Endothelial cell of umbilical vein (primary cell): ENCODE measurements at regions of chr1 and their contacts with region 1.

Region 1: DNA sequence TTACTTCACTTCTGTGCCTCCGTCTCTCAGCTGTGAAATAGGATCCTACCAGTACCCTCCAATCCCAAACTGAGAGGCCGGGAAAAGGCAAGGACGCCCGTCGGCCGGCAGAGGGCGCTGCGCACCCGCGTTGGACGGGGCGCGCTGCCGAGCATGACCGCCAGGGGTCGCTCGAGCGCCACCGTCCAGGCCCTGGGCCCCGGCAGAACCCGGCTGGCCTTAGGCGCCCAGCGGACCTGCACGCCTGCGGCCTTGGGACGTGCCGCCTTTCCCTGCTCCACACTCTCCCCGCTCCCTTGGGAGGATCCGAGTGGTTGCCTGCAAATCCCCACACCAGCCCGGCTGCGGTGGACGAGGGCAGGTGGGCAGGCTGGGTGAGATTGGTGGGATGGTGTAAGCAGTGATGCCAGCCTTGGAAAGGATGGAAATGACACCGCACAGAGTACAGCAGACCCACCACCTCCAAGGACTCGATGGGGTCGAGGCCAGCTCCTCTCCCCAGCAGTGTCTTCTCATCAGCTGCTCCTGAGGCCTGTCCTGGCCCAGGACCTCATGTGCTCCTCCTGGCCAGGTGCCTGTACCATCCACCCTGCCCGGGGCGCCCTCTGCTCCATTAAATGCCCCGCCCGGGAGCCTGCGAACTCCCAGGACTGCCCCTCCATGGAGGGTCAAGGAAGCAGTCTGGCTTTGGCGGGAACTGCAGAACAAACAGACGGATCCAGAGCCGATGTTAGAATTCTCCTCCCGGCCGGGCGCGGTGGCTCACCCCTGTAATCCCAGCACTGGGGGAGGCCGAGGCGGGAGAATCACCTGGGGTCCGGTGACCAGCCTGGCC is 47.4 kb upstream of the LBR start:
- DNase-seq: peak; percentile 74
- H3K4me3 ChIP-seq: no peak overlapping the region
- H3K27ac ChIP-seq: no peak overlapping the region
- H3K4me1 ChIP-seq: no peaks in the 10 kb centered on the region
- H3K27me3 ChIP-seq: no peaks in the 10 kb centered on the region
- CTCF ChIP-seq: peak; percentile 99 to 100
- POLR2A ChIP-seq: no peak

Region 2: DNA sequence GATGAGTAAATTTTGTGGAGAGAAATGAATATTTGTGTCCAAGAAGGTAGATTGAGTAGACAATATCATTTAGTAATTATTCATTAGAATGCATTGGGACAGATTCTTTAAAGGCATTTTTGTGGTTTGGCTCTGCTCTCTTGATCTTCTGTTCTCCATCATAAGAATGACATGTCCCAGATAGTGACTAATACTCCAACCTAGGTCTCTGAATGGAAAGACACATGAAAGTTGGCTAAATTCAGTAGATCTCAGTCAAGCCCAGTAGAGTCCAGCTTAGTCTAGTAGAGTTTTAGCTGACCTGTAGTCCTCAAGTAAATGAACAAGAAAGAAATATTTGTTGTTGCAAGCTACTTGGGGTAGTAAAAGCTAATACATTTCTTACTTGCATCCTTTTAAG is 607.5 kb before region 1 on chr1:
- CTCF ChIA-PET with region 1: no interaction called
- POLR2A ChIA-PET with region 1: no interaction called
- dilution Hi-C with region 1: no loop called
- intact Hi-C with region 1: no loop called
- DNase-seq: no peak
- H3K4me3 ChIP-seq: no peak overlapping the region
- H3K27ac ChIP-seq: no peak overlapping the region
- H3K4me1 ChIP-seq: no peaks in the 10 kb centered on the region
- H3K27me3 ChIP-seq: no peaks in the 10 kb centered on the region
- CTCF ChIP-seq: no peak
- POLR2A ChIP-seq: no peak

Region 3: GRCh38 chr1:225460737-225461562 is 14.3 kb before region 1 on chr1:
- CTCF ChIA-PET with region 1: interaction called, 10 read pairs
- POLR2A ChIA-PET with region 1: no interaction called
- dilution Hi-C with region 1: no loop called
- intact Hi-C with region 1: no loop called
- DNase-seq: no peak
- H3K4me3 ChIP-seq: no peak overlapping the region
- H3K27ac ChIP-seq: no peak overlapping the region
- H3K4me1 ChIP-seq: peaks cover 10% of the 10 kb centered on the region
- H3K27me3 ChIP-seq: no peaks in the 10 kb centered on the region
- CTCF ChIP-seq: no peak
- POLR2A ChIP-seq: no peak

Region 4: DNA sequence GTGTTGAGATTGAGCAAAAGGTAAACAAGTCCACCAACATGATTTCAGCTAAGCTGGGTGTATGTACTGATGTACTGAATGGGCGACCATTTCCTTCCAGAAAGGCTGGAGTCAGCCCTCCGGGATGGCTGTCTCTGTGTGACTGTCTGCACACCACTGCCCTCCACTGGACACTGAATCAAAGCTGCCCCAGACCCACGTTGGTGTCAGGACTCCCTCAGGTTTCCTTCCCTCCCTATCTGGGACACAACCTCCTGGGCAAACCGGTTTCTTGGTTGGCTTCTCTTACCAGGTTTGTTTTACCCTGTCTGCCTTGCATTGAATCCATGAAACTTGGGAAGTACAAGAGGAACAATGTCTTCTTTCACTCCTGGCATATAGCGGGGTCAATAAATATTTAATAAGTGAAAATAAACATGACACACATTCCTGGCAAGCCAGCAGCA is 297.1 kb after region 1 on chr1:
- CTCF ChIA-PET with region 1: interaction called, 81 read pairs
- POLR2A ChIA-PET with region 1: no interaction called
- dilution Hi-C with region 1: no loop called
- intact Hi-C with region 1: loop called (anchors 1 kb)
- DNase-seq: peak; percentile 87
- H3K4me3 ChIP-seq: no peak overlapping the region
- H3K27ac ChIP-seq: no peak overlapping the region
- H3K4me1 ChIP-seq: peaks cover 19% of the 10 kb centered on the region
- H3K27me3 ChIP-seq: no peaks in the 10 kb centered on the region
- CTCF ChIP-seq: peak; percentile 88 to 90
- POLR2A ChIP-seq: no peak

Region 5: DNA sequence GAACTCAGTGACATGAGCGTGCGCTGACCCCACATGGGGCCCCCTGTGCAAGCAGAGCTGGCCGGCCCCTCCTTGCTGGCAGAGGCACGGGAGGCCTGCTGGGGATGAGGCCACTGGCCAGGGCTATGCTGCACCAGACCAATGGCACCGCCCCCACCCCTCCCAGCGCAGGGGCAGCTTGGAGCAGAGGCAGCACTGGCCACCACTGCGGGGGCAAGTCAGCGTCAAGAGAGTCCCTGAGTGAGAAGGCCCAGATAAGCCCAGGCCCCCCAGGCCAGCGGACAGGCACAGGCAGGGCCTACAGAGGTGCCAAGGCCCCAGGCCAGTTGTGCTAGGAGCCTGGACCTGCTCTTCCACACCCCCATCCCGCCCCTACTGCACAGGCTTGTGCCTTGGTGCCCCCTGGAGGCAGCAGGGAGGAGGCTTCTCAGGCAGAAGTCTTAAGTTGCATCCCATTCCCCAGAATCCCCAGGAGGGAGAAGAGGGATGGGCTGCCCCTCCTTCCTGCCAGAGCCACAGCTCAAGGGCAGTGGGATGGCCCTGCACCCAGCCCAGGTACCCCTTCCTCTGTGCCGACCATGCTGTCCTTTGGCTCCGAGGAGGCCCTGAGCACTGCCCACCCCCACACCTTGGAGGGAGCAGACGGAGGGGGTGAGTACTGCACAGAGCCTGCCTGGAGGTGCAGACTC is 370.5 kb after region 1 on chr1:
- CTCF ChIA-PET with region 1: interaction called, 27 read pairs
- POLR2A ChIA-PET with region 1: no interaction called
- dilution Hi-C with region 1: no loop called
- intact Hi-C with region 1: loop called (anchors 1 kb)
- DNase-seq: peak; percentile 70
- H3K4me3 ChIP-seq: no peak overlapping the region
- H3K27ac ChIP-seq: no peak overlapping the region
- H3K4me1 ChIP-seq: no peaks in the 10 kb centered on the region
- H3K27me3 ChIP-seq: no peaks in the 10 kb centered on the region
- CTCF ChIP-seq: peak; percentile 72 to 91
- POLR2A ChIP-seq: no peak

Region 6: GRCh38 chr1:225911191-225912130 is 436.3 kb after region 1 on chr1:
- CTCF ChIA-PET with region 1: interaction called, 82 read pairs
- POLR2A ChIA-PET with region 1: no interaction called
- dilution Hi-C with region 1: no loop called
- intact Hi-C with region 1: loop called (anchors 1 kb)
- DNase-seq: peak; percentile 47
- H3K4me3 ChIP-seq: no peak overlapping the region
- H3K27ac ChIP-seq: no peak overlapping the region
- H3K4me1 ChIP-seq: no peaks in the 10 kb centered on the region
- H3K27me3 ChIP-seq: no peaks in the 10 kb centered on the region
- CTCF ChIP-seq: peak; percentile 88 to 90
- POLR2A ChIP-seq: no peak

Region 7: GRCh38 chr1:225987491-225988316 is 512.5 kb after region 1 on chr1:
- CTCF ChIA-PET with region 1: interaction called, 23 read pairs
- POLR2A ChIA-PET with region 1: no interaction called
- dilution Hi-C with region 1: no loop called
- intact Hi-C with region 1: no loop called
- DNase-seq: peak; percentile 58
- H3K4me3 ChIP-seq: no peak overlapping the region
- H3K27ac ChIP-seq: no peak overlapping the region
- H3K4me1 ChIP-seq: no peaks in the 10 kb centered on the region
- H3K27me3 ChIP-seq: no peaks in the 10 kb centered on the region
- CTCF ChIP-seq: peak; percentile 36 to 57
- POLR2A ChIP-seq: no peak

Region 8: DNA sequence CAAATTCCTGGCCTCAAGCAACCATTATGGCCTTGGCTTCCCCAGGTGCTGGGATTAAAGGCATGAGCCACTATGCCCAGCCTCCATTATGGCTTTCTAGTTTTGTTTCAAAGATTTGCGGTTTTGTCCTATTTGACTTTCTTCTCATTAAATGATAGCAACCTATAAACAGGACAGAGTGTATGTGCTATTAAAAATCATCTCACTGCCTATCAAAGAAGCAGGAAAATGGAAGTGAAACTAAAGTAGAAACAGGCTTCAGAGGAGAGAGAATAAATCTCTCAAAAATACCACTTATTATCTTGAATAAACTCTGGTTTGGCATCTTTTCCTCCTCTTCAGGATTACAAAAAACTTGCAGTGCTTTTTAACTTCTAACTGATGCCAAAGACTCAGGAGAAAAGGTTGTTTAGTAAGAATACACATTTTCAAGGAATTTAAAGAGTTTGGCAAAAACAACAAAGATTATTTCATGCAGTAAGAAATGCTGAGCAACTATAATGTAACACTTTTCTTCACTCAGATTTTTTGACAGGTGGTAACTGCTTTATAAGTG is 682.6 kb after region 1 on chr1:
- CTCF ChIA-PET with region 1: no interaction called
- POLR2A ChIA-PET with region 1: no interaction called
- dilution Hi-C with region 1: no loop called
- intact Hi-C with region 1: no loop called
- DNase-seq: no peak
- H3K4me3 ChIP-seq: no peak overlapping the region
- H3K27ac ChIP-seq: no peak overlapping the region
- H3K4me1 ChIP-seq: no peaks in the 10 kb centered on the region
- H3K27me3 ChIP-seq: no peaks in the 10 kb centered on the region
- CTCF ChIP-seq: no peak
- POLR2A ChIP-seq: no peak